MCF 10A (cell line): ENCODE measurements at regions of chr3 and their contacts with region 1.

Region 1: DNA sequence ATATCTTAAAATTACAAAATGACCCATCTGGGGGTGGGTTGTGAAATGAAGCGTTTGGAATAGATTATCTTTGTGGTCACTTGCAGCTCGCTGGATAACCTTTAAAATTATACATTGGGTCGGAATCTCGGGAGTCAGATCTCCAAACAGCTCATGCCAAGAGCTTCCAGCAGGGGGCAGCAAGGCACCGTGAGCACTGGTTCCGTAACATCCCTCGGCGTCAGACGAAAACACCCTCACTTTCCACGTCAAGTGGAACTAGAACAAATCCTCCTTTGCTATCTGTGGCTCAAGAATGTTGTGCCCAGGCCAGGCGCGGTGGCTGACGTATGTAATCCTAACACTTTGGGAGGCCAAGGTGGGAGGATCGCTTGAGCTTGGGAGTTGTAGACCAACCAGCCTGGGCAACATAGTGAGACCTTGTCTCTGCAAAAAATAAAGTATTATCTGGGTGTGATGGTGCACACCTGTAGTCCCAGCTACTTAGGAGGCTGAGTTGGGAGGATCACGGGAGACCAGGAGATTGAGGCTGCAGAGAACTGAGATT is 31.1 kb downstream of the UMPS start:
- DNase-seq: peak; percentile 75
- H3K4me3 Mint-ChIP-seq: no peak overlapping the region
- H3K27ac Mint-ChIP-seq: peak overlapping the region; percentile 53
- H3K4me1 Mint-ChIP-seq: peaks cover 4% of the 10 kb centered on the region
- H3K27me3 Mint-ChIP-seq: no peaks in the 10 kb centered on the region
- CTCF ChIP-seq: peak; percentile 90

Region 2: GRCh38 chr3:124747111-124747981 is 14.0 kb before region 1 on chr3:
- CTCF ChIA-PET with region 1: interaction called, 20 read pairs
- POLR2A ChIA-PET with region 1: interaction called, 4 read pairs
- intact Hi-C with region 1: no loop called
- DNase-seq: no peak
- H3K4me3 Mint-ChIP-seq: no peak overlapping the region
- H3K27ac Mint-ChIP-seq: no peak overlapping the region
- H3K4me1 Mint-ChIP-seq: no peaks in the 10 kb centered on the region
- H3K27me3 Mint-ChIP-seq: no peaks in the 10 kb centered on the region
- CTCF ChIP-seq: no peak

Region 3: DNA sequence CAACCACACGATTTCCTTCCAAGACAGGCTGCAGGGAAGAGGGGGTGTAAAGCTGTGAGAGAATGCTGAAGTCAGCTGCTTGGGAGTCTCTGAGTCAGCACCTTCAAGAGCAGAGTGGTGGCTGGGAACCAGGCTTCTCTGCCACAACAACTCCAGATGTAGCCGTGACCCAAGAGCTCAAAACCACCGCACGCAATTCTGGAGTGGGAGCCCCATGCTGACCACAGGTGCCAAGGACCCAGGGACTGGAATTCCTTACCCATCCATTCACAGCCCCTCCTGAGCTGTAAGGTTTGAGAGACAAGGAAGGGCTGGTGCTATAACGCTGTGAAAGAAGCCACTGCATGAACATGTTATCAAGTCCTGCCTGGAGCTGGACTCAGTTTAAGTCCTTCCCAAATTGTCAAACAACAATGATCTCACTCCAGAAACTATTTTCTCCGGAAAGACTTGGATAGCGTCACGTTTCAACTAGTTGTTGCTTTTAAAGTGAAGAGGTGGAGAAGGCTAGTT is 30.4 kb after region 1 on chr3:
- CTCF ChIA-PET with region 1: interaction called, 72 read pairs
- POLR2A ChIA-PET with region 1: interaction called, 7 read pairs
- intact Hi-C with region 1: no loop called
- DNase-seq: no peak
- H3K4me3 Mint-ChIP-seq: no peak overlapping the region
- H3K27ac Mint-ChIP-seq: no peak overlapping the region
- H3K4me1 Mint-ChIP-seq: peaks cover 28% of the 10 kb centered on the region
- H3K27me3 Mint-ChIP-seq: no peaks in the 10 kb centered on the region
- CTCF ChIP-seq: no peak

Region 4: GRCh38 chr3:124905849-124906248 is 144.5 kb after region 1 on chr3:
- CTCF ChIA-PET with region 1: interaction called, 263 read pairs
- POLR2A ChIA-PET with region 1: interaction called, 22 read pairs
- intact Hi-C with region 1: loop called (anchors 1 kb)
- DNase-seq: peak; percentile 16
- H3K4me3 Mint-ChIP-seq: no peak overlapping the region
- H3K27ac Mint-ChIP-seq: no peak overlapping the region
- H3K4me1 Mint-ChIP-seq: no peaks in the 10 kb centered on the region
- H3K27me3 Mint-ChIP-seq: peaks cover 31% of the 10 kb centered on the region
- CTCF ChIP-seq: no peak

Region 5: DNA sequence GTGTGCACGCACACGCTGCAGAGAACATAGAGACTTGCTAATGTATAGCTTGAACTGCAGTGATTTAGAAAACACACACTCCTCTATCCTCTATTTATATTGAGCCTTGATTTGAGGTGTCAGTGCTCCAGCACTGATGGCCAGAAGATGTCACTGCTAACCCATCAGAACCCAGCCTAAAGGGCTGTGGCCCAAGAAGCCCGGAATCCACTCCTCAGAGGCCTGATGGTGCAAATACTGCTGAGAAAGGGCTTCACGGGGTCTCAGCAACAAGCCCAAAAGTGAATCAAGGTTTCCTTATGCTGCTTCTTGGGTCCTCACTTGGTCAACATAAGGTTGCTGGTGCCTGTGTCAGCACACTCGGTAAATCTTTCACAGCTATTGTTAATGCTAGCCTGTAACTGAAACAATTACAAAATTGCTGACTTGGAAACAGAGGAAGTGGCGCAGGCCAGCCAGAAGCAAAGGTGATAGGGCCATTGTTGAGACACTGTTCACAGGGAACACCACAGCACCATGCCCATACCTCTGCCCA is 234.2 kb after region 1 on chr3:
- CTCF ChIA-PET with region 1: interaction called, 13 read pairs
- POLR2A ChIA-PET with region 1: no interaction called
- intact Hi-C with region 1: no loop called
- DNase-seq: peak; percentile 62
- H3K4me3 Mint-ChIP-seq: no peak overlapping the region
- H3K27ac Mint-ChIP-seq: no peak overlapping the region
- H3K4me1 Mint-ChIP-seq: no peaks in the 10 kb centered on the region
- H3K27me3 Mint-ChIP-seq: no peaks in the 10 kb centered on the region
- CTCF ChIP-seq: peak; percentile 82

Region 6: DNA sequence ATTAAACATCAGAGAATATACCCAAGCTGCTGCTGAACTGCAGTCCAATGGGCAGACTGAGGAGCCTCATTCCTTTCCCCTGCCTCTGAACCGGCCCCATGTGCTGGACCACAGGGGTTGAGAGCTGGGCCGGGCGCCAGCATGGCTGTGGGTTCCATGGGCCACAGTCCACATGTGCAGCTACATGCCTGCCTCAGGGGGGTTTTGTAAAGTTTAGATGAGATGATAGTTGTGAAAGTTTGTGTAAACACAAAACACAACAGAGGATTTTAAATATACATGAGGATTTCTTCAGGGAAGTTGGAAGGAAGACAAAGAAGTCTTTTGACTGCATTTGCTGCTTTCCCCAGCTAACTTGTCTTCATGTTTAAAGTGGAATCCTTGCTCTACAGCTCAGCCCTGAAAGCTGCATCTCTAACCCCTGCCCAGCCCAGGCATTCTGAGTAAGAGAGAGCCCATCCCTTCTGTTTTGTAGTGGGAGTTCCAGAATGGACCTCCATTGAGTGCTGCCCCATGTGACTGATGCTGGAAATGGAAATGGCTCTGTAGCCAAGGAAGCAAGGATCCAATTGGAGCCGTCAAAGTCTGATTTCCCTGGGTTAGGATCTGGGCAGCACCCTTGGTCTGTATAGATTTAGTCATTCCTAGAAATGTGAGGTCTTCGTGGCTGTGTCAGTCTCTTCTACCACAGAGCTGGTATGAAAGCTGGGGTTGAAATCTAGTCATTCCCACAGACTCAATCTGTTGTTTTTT is 433.7 kb after region 1 on chr3:
- CTCF ChIA-PET with region 1: no interaction called
- POLR2A ChIA-PET with region 1: no interaction called
- intact Hi-C with region 1: no loop called
- DNase-seq: no peak
- H3K4me3 Mint-ChIP-seq: no peak overlapping the region
- H3K27ac Mint-ChIP-seq: no peak overlapping the region
- H3K4me1 Mint-ChIP-seq: no peaks in the 10 kb centered on the region
- H3K27me3 Mint-ChIP-seq: no peaks in the 10 kb centered on the region
- CTCF ChIP-seq: no peak